Activated CD4-positive, alpha-beta T cell treated with anti-CD3 and anti-CD28 coated beads for 36 hours (primary cell): ENCODE measurements at regions of chr18 and their contacts with region 1.

Region 1: GRCh38 chr18:10787293-10787901 is 261.6 kb downstream of the NAPG start:
- DNase-seq: peak; percentile 95
- ATAC-seq: peak; percentile 89
- H3K4me3 Mint-ChIP-seq: no peak overlapping the region
- H3K27ac Mint-ChIP-seq: no peak overlapping the region
- H3K4me1 Mint-ChIP-seq: peaks cover 4% of the 10 kb centered on the region
- H3K27me3 Mint-ChIP-seq: peaks cover 39% of the 10 kb centered on the region

Region 2: DNA sequence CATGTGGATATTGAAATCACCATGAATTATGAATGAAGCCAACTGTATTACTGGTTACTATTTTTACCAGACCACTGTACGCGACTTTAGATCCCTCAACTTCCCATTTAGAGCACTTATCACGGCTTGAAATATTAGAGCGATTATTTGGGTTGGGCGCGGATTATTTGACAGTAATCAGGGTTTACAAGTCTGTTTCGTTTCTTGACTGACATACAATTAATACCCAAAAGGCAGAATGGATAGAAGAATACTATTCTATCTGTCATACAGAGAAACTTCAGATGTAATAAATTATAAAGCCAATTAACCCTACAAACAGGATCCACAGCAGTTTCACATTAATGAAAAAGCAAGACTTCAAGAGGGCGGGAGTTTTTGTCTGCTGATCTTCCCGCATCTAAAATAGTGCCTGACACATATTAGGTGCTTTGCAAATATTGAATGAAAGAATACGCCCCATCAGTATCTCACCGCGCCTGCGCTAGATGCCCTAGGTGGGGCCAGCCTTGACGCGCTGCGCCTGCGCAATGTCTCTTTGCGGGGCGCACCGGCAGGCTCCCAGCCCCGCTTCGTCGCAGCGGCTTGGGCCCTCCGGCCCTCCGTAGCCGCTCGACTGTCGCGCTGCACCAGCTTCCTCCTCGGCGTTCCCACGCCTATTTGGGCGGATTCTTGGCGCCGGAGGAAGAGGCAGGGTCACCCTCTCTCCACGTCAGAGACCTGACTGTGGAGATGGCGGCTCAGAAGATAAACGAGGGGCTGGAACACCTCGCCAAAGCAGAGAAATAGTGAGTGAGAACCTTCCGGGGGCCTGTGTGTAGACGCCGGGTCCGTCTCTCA is 261.8 kb before region 1 on chr18 and contains the start of gene NAPG:
- CTCF ChIA-PET with region 1: no interaction called
- POLR2A ChIA-PET with region 1: no interaction called
- intact Hi-C with region 1: loop called in 1 of 2 experiments (anchors 5 kb)
- DNase-seq: peak; percentile 94
- ATAC-seq: peak; percentile 84
- H3K4me3 Mint-ChIP-seq: peak within 1 kb of the TSS; percentile 92
- H3K27ac Mint-ChIP-seq: peak within 1 kb of the TSS; percentile 96
- H3K4me1 Mint-ChIP-seq: peaks cover 49% of the 10 kb centered on the region
- H3K27me3 Mint-ChIP-seq: peaks cover 4% of the 10 kb centered on the region
- total RNA-seq, gene NAPG: 28.6 to 31.0 TPM

Region 3: DNA sequence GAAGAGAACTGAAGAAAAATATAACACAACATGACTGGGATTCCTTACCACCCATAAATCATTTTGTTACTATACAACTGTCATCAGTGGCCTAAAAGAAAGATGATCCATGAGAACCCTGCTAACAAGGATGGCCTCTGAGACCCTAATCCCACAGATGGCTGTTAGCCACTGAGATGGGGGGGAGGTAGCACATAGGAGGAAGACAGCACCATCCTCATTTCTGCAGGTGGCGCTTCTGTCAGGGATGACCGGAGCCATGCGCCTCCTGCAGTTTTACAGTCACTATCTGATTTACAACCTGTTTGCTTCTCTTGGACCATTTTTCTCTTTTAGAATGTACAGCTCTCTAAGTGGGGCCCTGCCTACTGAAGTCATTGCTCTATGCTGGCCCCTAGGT is 18.2 kb after region 1 on chr18:
- CTCF ChIA-PET with region 1: interaction called, 3 read pairs
- POLR2A ChIA-PET with region 1: no interaction called
- intact Hi-C with region 1: loop called in 1 of 2 experiments (anchors 2 kb)
- DNase-seq: no peak
- ATAC-seq: no peak
- H3K4me3 Mint-ChIP-seq: no peak overlapping the region
- H3K27ac Mint-ChIP-seq: no peak overlapping the region
- H3K4me1 Mint-ChIP-seq: no peaks in the 10 kb centered on the region
- H3K27me3 Mint-ChIP-seq: no peaks in the 10 kb centered on the region

Region 4: DNA sequence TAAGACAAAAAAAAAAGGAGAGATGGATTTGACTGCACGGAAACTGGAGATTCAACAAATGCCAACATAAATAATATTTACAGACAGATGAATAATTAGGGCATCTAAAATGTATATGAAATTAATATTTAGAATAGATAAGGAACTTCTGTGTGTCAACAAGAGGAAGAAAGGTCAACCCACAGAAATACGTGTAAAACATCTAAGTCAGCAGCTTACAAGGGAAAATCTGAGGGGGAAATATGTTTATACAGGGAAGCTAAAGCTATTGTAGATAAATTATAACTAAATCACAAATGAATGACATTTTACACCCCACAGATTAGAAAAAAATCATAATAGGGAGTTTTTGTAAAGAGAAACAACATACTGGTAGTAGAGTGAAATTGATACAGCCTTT is 202.1 kb after region 1 on chr18:
- CTCF ChIA-PET with region 1: no interaction called
- POLR2A ChIA-PET with region 1: no interaction called
- intact Hi-C with region 1: no loop called
- DNase-seq: no peak
- ATAC-seq: no peak
- H3K4me3 Mint-ChIP-seq: no peak overlapping the region
- H3K27ac Mint-ChIP-seq: no peak overlapping the region
- H3K4me1 Mint-ChIP-seq: no peaks in the 10 kb centered on the region
- H3K27me3 Mint-ChIP-seq: no peaks in the 10 kb centered on the region

Region 5: GRCh38 chr18:11040823-11041656 is 253.6 kb after region 1 on chr18:
- CTCF ChIA-PET with region 1: interaction called, 4 read pairs
- POLR2A ChIA-PET with region 1: no interaction called
- intact Hi-C with region 1: loop called (anchors 1 to 5 kb)
- DNase-seq: peak; percentile 36
- ATAC-seq: no peak
- H3K4me3 Mint-ChIP-seq: no peak overlapping the region
- H3K27ac Mint-ChIP-seq: no peak overlapping the region
- H3K4me1 Mint-ChIP-seq: no peaks in the 10 kb centered on the region
- H3K27me3 Mint-ChIP-seq: peaks cover 5% of the 10 kb centered on the region

Region 6: DNA sequence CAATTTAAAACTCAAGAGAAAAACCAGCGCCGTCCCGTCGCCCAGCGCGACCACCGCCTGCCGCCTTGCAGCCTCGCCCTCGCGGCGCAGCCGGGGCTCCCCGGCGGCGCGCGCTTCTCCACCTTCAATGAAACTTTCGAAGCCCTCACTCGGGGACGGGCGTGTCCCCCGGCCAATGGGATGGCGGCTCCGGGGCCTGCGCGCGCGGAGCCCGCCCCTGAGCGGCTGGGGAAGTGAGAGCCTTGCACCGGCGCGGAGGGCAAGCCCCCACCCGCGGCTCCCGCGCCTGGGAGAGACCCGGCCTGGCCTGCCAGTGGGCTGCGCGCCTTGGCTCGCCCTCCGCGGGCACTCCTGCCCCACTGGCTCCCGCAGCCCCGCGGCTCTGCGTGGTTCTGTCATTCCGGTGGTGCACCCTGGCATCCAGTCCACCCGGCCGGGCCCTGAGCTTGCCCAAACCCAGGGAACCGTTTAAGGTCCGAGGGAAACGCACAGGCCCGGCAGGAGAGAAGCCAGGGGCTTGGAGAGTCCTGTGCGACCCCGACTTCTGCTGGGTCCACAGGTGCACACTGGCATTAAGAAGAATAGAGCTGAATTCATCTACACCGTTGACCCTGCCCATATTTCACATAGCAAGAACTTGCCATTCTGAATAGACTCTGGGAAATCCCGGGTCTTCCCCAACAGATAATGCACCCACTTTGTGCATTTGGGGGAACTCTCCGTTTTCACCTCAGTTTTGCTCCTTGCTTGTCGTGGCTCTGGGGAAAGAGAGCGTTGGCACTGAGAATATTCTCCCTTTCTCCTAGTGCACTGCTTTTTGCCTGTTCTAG is 362.3 kb after region 1 on chr18 and contains the start of gene PIEZO2:
- CTCF ChIA-PET with region 1: no interaction called
- POLR2A ChIA-PET with region 1: no interaction called
- intact Hi-C with region 1: loop called in 1 of 2 experiments (anchors 5 kb)
- DNase-seq: peak; percentile 44
- ATAC-seq: peak; percentile 42
- H3K4me3 Mint-ChIP-seq: no peak within 1 kb of the TSS
- H3K27ac Mint-ChIP-seq: no peak within 1 kb of the TSS
- H3K4me1 Mint-ChIP-seq: peaks cover 5% of the 10 kb centered on the region
- H3K27me3 Mint-ChIP-seq: peaks cover 34% of the 10 kb centered on the region
- total RNA-seq, gene PIEZO2: not detected

Region 7: GRCh38 chr18:12668041-12668440 is 1880.6 kb after region 1 on chr18:
- CTCF ChIA-PET with region 1: no interaction called
- POLR2A ChIA-PET with region 1: no interaction called
- intact Hi-C with region 1: no loop called
- DNase-seq: no peak
- ATAC-seq: no peak
- H3K4me3 Mint-ChIP-seq: no peak overlapping the region
- H3K27ac Mint-ChIP-seq: no peak overlapping the region
- H3K4me1 Mint-ChIP-seq: peaks cover 3% of the 10 kb centered on the region
- H3K27me3 Mint-ChIP-seq: no peaks in the 10 kb centered on the region